AG04449 (cell line): ENCODE measurements at regions of chr11 and their contacts with region 1.

Region 1: GRCh38 chr11:62855571-62856332 is 16.4 kb upstream of the WDR74 start:
- DNase-seq: peak; percentile 82
- H3K4me3 ChIP-seq: peak overlapping the region; percentile 92
- CTCF ChIP-seq: no peak

Region 2: GRCh38 chr11:62614275-62614674 is 241.5 kb before region 1 on chr11:
- CTCF ChIA-PET with region 1: no interaction called
- POLR2A ChIA-PET with region 1: no interaction called
- DNase-seq: no peak
- H3K4me3 ChIP-seq: no peak overlapping the region
- CTCF ChIP-seq: no peak

Region 3: GRCh38 chr11:62831520-62832335 is 24.0 kb before region 1 on chr11 and contains the start of gene STX5:
- CTCF ChIA-PET with region 1: interaction called, 3 read pairs
- POLR2A ChIA-PET with region 1: interaction called, 16 read pairs
- DNase-seq: peak; percentile 95
- H3K4me3 ChIP-seq: peak within 1 kb of the TSS; percentile 85
- CTCF ChIP-seq: no peak

Region 4: GRCh38 chr11:62880803-62881578 is 25.2 kb after region 1 on chr11 and contains the start of gene SLC3A2:
- CTCF ChIA-PET with region 1: interaction called, 38 read pairs
- POLR2A ChIA-PET with region 1: interaction called, 27 read pairs
- DNase-seq: no peak
- H3K4me3 ChIP-seq: peak within 1 kb of the TSS; percentile 100
- CTCF ChIP-seq: peak; percentile 86

Region 5: DNA sequence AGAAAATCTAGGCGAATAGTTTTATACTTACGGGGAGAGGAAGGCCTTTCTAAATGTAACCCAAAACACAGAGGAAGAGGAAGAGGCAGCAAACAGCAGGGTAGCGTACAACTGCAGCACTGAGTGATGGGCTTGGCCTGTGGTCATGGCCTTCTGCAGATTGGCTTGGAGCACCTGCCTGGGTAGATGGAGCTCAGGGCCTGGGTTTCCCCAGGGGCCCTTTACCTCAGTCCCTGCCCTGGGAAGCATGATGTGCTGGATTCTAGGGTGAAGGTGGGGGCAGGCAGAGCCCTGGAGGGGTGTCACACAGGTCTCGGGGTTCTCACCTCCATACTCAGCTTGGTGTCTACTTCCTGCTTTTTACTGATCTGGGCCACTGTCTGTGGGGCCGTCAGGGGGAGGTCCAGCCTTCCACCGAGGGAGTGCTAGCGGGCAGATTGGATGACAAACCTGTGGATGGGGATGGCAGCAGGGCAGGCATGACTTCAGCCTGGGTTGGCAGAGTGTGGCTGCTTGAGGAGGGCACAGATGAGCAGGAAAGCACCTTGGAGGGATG is 93.1 kb after region 1 on chr11:
- CTCF ChIA-PET with region 1: no interaction called
- POLR2A ChIA-PET with region 1: no interaction called
- DNase-seq: no peak
- H3K4me3 ChIP-seq: no peak overlapping the region
- CTCF ChIP-seq: no peak